ENCODE measurements at regions of chr19 and their contacts with region 1.

Region 1: DNA sequence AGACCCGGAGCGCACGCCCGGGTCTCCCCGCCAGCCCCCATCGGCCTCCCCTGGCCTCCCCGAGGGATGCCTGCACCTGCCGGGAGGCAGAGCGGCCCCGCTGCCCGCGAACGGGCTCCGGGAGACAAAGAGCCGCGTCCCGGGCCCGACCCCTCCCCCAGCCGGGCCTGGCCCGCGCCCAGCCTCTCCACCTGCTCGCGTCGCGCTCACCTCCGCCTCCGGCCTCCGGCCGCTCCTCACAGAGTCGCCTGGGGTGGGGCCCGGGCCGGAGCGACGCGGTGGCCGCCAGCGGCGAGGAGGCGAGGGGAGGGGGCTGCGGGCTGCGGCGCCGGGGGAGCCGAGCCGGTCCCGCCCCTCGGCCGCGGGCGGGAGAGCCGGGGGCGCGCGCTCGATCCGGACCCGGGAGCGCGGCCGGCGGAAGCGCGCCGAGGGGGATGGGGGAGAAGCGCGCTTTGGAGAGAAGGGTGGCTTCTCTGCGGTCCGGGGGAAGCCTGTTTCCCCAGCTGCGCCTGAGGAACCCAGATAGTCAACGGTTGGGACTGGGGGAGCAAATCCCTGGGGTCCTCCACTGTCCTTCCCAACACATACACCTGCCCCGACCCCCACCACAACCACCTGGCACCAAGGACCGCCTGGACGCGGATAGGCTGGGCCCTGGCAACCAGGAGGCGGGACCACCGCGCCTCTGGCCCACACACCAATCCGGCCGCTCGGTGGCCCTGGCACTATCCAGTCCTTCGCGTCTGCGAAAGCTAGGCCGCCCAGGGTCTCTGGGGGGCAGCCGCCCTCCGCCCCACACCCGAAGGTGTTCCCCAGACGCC is at the start of gene PRR36:
- DNase-seq: no peak
- total RNA-seq, gene PRR36: 0.09 to 0.14 TPM

Region 2: GRCh38 chr19:7829561-7830271 is 44.6 kb before region 1 on chr19 and contains the start of gene EVI5L:
- intact Hi-C with region 1: loop called in 1 of 2 experiments (anchors 1 kb)
- DNase-seq: peak; percentile 99
- total RNA-seq, gene EVI5L: 14.9 to 16.0 TPM